HEK293T (cell line): ENCODE measurements at regions of chr12 and their contacts with region 1.

Region 1: GRCh38 chr12:112151766-112152541 is 26.6 kb downstream of the TRAFD1 start:
- DNase-seq: no peak

Region 2: DNA sequence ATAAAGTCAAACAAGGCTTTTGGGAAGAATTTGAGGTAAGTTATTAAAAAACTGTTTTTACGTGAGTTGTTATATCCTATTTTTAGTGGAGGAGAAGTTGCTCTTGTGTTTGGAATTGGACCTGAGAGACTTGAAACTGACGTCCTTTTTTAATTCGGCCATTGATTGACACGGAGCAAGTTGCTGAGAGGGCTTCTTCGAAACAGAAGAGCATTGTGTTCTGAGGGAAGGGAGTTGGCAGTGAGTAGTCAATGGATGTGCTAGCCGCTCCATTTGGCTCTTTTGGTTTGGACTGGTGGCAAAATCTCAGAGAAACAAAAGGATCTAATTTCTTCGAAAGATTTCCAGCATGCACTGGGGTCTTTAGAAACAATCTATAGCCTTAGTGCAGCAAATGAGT is 304.1 kb after region 1 on chr12:
- CTCF ChIA-PET with region 1: interaction called, 10 read pairs
- POLR2A ChIA-PET with region 1: no interaction called
- DNase-seq: no peak